Activated CD8-positive, alpha-beta T cell treated with anti-CD3 and anti-CD28 coated beads for 36 hours (primary cell): ENCODE measurements at regions of chr1 and their contacts with region 1.

Region 1: DNA sequence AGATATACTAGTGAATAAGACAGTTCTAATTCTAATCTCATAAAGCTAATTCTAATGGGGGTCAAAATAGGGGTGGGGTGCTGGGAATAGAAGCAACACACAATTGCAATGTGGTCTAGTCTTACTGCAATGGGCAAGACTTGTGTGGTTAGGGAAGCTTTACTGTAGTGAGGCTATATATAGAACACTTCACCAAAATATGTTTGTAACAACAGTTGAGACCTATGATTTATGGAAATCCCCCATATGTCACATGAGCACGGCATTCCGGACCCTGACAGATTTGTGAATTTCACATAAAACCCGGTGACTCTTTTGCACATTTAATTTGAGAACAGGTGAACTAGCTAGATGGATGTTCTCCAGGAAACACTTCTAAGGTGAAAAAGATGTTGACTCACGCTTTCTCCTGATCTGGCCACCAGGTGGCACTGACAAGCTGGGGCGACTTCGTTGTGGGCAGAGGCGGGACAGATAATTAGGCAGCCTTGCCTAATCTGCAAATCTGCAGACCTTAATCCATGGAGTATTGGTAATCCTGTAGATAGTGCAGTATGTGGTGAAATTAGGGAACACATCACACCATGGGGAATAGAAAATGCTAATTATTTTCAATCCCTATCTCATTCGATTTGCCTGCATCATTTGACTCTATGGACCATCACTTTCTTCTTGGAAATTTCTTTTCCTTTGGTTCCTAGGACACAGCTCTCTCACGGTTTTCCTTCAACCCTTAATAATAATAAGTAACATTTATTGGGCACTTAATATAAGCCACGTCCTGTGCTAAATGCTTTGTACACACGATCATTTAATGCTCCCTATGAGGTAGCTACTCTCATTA is 37.7 kb downstream of the KIAA0040 start:
- DNase-seq: peak; percentile 83
- ATAC-seq: peak; percentile 65
- H3K4me3 Mint-ChIP-seq: no peak overlapping the region
- H3K27ac Mint-ChIP-seq: no peak overlapping the region
- H3K4me1 Mint-ChIP-seq: peaks cover 12% of the 10 kb centered on the region
- H3K27me3 Mint-ChIP-seq: peaks cover 25% of the 10 kb centered on the region
- CTCF ChIP-seq: peak; percentile 88

Region 2: DNA sequence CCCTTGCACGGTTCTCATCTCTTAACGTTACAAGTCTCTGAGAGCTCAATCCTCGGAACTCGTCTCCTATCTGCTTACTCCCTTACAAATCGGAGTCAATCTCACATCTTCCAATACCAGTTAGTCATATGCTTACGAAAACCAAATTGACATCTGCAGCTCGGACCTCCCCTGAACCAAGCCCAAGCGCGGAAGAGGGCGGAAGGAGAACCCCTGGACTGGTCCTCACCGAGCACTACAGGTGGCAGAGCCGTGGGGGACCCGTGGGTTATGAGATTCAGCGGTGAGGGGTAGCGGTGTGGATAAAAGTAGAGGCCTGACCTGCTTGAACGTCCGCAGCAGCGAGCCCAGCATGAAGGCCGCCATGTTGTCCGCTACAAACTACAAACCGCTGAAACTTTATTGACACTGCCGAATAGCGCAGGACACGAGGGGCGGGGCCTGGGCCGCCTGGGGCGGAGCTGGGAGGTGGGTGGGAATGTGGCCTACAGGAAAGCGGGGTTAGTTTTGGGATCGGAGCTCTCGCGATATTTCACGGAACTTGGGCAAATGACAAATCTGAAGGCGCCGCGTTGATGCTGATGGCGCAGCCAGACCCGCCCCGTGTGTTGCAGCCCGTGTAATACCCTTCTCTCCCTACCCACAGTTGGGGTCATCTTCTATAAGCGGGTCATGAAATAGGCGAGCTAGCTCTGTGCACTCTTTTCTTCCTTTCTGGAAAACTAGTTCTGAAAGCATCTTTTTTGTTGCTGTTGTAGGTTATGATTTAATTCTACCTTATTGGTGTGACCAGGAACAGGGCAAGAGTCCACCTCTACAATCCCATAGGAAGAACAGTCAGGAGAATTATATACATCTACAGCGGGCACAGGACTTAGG is 131.6 kb before region 1 on chr1 and contains the start of gene MRPS14:
- CTCF ChIA-PET with region 1: interaction called, 13 read pairs
- POLR2A ChIA-PET with region 1: no interaction called
- intact Hi-C with region 1: no loop called
- DNase-seq: peak; percentile 99
- ATAC-seq: peak; percentile 92
- H3K4me3 Mint-ChIP-seq: peak within 1 kb of the TSS; percentile 93
- H3K27ac Mint-ChIP-seq: peak within 1 kb of the TSS; percentile 93
- H3K4me1 Mint-ChIP-seq: peaks cover 30% of the 10 kb centered on the region
- H3K27me3 Mint-ChIP-seq: no peaks in the 10 kb centered on the region
- CTCF ChIP-seq: no peak
- total RNA-seq, gene MRPS14: 42.1 to 45.7 TPM

Region 3: GRCh38 chr1:175129997-175130648 is 24.7 kb before region 1 on chr1:
- CTCF ChIA-PET with region 1: interaction called, 17 read pairs
- POLR2A ChIA-PET with region 1: no interaction called
- intact Hi-C with region 1: no loop called
- DNase-seq: no peak
- ATAC-seq: no peak
- H3K4me3 Mint-ChIP-seq: no peak overlapping the region
- H3K27ac Mint-ChIP-seq: no peak overlapping the region
- H3K4me1 Mint-ChIP-seq: no peaks in the 10 kb centered on the region
- H3K27me3 Mint-ChIP-seq: peaks cover 9% of the 10 kb centered on the region
- CTCF ChIP-seq: no peak

Region 4: GRCh38 chr1:175183586-175183985 is 28.7 kb after region 1 on chr1:
- CTCF ChIA-PET with region 1: interaction called, 40 read pairs
- POLR2A ChIA-PET with region 1: interaction called, 3 read pairs
- intact Hi-C with region 1: no loop called
- DNase-seq: no peak
- ATAC-seq: no peak
- H3K4me3 Mint-ChIP-seq: no peak overlapping the region
- H3K27ac Mint-ChIP-seq: no peak overlapping the region
- H3K4me1 Mint-ChIP-seq: peaks cover 86% of the 10 kb centered on the region
- H3K27me3 Mint-ChIP-seq: no peaks in the 10 kb centered on the region
- CTCF ChIP-seq: no peak

Region 5: DNA sequence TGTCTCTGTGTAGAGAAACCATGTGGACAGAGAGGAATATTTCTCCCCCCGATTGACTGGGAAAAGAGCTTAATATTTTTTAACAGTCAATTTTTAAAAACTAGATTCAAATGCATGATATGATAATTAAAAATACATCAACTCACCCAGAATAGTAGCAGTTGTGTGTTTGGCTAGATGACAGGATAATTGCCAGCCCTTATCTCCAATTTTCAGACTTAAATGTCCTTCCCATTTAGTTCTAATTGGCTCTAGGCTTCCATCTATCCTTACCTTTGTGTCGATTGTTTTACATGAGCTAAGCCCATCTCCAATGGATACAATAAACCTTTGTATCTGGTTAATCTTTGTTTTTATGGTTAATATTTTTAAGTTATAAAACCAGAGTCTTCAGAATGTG is 61.6 kb after region 1 on chr1:
- CTCF ChIA-PET with region 1: interaction called, 13 read pairs
- POLR2A ChIA-PET with region 1: no interaction called
- intact Hi-C with region 1: no loop called
- DNase-seq: no peak
- ATAC-seq: no peak
- H3K4me3 Mint-ChIP-seq: no peak overlapping the region
- H3K27ac Mint-ChIP-seq: no peak overlapping the region
- H3K4me1 Mint-ChIP-seq: peaks cover 19% of the 10 kb centered on the region
- H3K27me3 Mint-ChIP-seq: no peaks in the 10 kb centered on the region
- CTCF ChIP-seq: no peak

Region 6: GRCh38 chr1:175312906-175313305 is 158.1 kb after region 1 on chr1:
- CTCF ChIA-PET with region 1: interaction called, 408 read pairs
- POLR2A ChIA-PET with region 1: no interaction called
- intact Hi-C with region 1: no loop called
- DNase-seq: no peak
- ATAC-seq: no peak
- H3K4me3 Mint-ChIP-seq: no peak overlapping the region
- H3K27ac Mint-ChIP-seq: no peak overlapping the region
- H3K4me1 Mint-ChIP-seq: no peaks in the 10 kb centered on the region
- H3K27me3 Mint-ChIP-seq: no peaks in the 10 kb centered on the region
- CTCF ChIP-seq: no peak

Region 7: GRCh38 chr1:175338387-175339135 is 183.7 kb after region 1 on chr1:
- CTCF ChIA-PET with region 1: interaction called, 50 read pairs
- POLR2A ChIA-PET with region 1: no interaction called
- intact Hi-C with region 1: no loop called
- DNase-seq: peak; percentile 79
- ATAC-seq: peak; percentile 100
- H3K4me3 Mint-ChIP-seq: no peak overlapping the region
- H3K27ac Mint-ChIP-seq: no peak overlapping the region
- H3K4me1 Mint-ChIP-seq: peaks cover 4% of the 10 kb centered on the region
- H3K27me3 Mint-ChIP-seq: peaks cover 16% of the 10 kb centered on the region
- CTCF ChIP-seq: peak; percentile 80